Gastrocnemius medialis (tissue), 4 donors: ENCODE measurements at regions of chr7 and their contacts with region 1.

Region 1: GRCh38 chr7:7103343-7104313 is 78.7 kb upstream of the C1GALT1 start:
- DNase-seq: no peak
- ATAC-seq: peak; percentile 74 to 80
- H3K4me3 ChIP-seq: no peak overlapping the region
- H3K27ac ChIP-seq: no peak overlapping the region
- H3K4me1 ChIP-seq: peaks cover 0 to 6% of the 10 kb centered on the region in 2 donors
- H3K27me3 ChIP-seq: no peaks in the 10 kb centered on the region
- CTCF ChIP-seq: peak; percentile 31 to 70 (median 59)
- POLR2A ChIP-seq: no peak

Region 2: GRCh38 chr7:7182156-7183060 is 78.8 kb after region 1 on chr7 and contains the start of gene C1GALT1:
- in situ Hi-C with region 1: no loop called
- intact Hi-C with region 1: loop called (anchors 5 kb)
- DNase-seq: peak; percentile 95
- ATAC-seq: peak; percentile 90 to 92
- H3K4me3 ChIP-seq: peak within 1 kb of the TSS; percentile 80 to 98 (median 88)
- H3K27ac ChIP-seq: peak within 1 kb of the TSS; percentile 94 to 99 (median 97)
- H3K4me1 ChIP-seq: peaks cover 24 to 29% of the 10 kb centered on the region in 2 donors
- H3K27me3 ChIP-seq: no peaks in the 10 kb centered on the region
- CTCF ChIP-seq: peak in 3 of 5 experiments; percentile 12 to 48 (median 25)
- POLR2A ChIP-seq: peak; percentile 82 to 90
- total RNA-seq, gene C1GALT1: 16.1 to 40.8 (median 27.5) TPM

Region 3: DNA sequence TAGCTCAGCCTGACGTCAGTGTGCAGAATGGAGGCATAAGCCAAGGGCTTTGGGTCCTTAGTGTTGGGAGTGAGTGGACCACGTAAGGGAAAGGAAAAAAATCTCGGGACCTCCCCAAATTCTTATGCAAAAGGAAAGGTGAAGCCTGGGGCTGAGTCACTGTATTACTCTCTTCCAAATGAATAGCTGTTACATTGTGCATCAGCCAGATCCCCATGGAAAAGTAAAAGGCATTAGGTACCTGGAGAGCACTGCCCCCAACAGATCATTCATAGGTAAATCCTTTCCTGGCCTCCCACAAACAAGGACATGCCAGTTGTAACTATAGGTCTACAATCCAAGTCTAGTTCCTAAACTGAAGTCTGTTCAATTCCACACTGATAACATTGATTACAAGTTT is 249.2 kb after region 1 on chr7:
- in situ Hi-C with region 1: no loop called
- intact Hi-C with region 1: loop called (anchors 10 kb)
- DNase-seq: no peak
- ATAC-seq: no peak
- H3K4me3 ChIP-seq: no peak overlapping the region
- H3K27ac ChIP-seq: no peak overlapping the region
- H3K4me1 ChIP-seq: no peaks in the 10 kb centered on the region
- H3K27me3 ChIP-seq: no peaks in the 10 kb centered on the region
- CTCF ChIP-seq: no peak
- POLR2A ChIP-seq: no peak

Region 4: DNA sequence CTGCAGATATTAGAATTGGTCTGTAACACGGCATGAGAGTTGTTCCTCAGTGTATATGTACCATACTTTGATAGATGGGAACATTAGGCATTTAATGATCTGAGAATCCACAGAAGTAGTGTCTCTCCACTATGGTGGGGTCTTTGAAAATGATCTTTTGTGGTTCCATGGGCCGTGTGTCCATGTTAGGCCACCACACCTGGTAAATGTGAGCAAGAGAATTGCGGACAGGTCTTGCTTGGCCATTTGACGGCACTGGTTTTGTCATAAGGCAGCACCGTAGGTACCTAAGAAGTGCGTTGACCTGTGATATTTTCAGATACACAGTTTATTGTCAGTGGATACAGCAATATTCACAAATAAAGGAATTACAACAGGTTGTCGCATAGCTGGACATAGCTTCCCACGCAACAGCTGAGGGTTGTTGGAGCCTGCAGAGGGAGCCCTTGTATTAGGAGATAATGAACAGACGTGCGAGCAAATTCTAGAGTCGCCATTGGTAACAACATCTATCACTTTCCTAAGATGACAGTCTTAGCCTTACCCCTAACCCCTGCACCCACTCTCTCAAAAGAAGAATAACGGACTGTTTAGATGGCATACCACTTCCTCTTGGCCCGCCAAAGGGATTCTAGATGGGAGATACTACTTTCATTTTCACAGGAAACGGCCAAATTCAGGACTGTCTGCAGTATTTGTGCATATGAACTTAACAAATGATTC is 320.7 kb after region 1 on chr7:
- in situ Hi-C with region 1: no loop called
- intact Hi-C with region 1: loop called (anchors 5 kb)
- DNase-seq: peak; percentile 11 to 33
- ATAC-seq: peak; percentile 76 to 87
- H3K4me3 ChIP-seq: peak overlapping the region; percentile 39 to 59 (median 52)
- H3K27ac ChIP-seq: no peak overlapping the region
- H3K4me1 ChIP-seq: no peaks in the 10 kb centered on the region
- H3K27me3 ChIP-seq: no peaks in the 10 kb centered on the region
- CTCF ChIP-seq: peak; percentile 46 to 72 (median 62)
- POLR2A ChIP-seq: no peak

Region 5: DNA sequence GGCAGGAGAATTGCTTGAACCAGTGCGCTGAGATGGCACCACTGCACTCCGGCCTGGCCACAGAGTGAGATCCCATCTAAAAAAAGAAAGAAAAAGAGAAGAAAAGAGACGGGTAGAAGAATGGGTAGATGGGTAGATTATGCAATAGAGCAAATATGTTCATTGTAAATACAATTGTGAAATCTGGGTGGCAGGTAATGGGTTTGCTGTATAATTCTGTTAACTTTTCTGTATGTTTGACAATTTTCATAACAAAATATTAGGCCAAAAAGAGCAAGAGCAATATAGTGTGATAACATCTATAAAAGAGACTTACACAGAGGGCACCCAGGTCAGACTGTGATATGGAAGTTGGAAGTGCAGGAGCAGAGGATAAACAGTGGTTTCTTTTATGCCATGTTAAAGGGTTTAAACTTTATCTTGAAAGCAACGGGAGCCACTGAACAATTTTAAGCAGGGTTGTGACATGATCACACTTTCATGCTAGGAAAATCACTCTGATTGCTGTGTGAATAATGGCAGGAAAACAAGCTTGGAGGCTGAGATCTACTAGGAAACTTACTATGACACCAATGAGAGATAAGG is 438.7 kb after region 1 on chr7:
- in situ Hi-C with region 1: loop called in 3 of 4 experiments (anchors 10 to 25 kb)
- intact Hi-C with region 1: loop called (anchors 5 kb)
- DNase-seq: no peak
- ATAC-seq: no peak
- H3K4me3 ChIP-seq: no peak overlapping the region
- H3K27ac ChIP-seq: no peak overlapping the region
- H3K4me1 ChIP-seq: no peaks in the 10 kb centered on the region
- H3K27me3 ChIP-seq: no peaks in the 10 kb centered on the region
- CTCF ChIP-seq: no peak
- POLR2A ChIP-seq: no peak